Right ventricle myocardium inferior (tissue), 1 donor: ENCODE measurements at regions of chr3 and their contacts with region 1.

Region 1: GRCh38 chr3:23999012-23999641 is 54.0 kb downstream of the NR1D2 start:
- DNase-seq: peak; percentile 73
- ATAC-seq: no peak

Region 2: GRCh38 chr3:23600167-23600871 is 398.8 kb before region 1 on chr3:
- intact Hi-C with region 1: no loop called
- DNase-seq: no peak
- ATAC-seq: no peak

Region 3: DNA sequence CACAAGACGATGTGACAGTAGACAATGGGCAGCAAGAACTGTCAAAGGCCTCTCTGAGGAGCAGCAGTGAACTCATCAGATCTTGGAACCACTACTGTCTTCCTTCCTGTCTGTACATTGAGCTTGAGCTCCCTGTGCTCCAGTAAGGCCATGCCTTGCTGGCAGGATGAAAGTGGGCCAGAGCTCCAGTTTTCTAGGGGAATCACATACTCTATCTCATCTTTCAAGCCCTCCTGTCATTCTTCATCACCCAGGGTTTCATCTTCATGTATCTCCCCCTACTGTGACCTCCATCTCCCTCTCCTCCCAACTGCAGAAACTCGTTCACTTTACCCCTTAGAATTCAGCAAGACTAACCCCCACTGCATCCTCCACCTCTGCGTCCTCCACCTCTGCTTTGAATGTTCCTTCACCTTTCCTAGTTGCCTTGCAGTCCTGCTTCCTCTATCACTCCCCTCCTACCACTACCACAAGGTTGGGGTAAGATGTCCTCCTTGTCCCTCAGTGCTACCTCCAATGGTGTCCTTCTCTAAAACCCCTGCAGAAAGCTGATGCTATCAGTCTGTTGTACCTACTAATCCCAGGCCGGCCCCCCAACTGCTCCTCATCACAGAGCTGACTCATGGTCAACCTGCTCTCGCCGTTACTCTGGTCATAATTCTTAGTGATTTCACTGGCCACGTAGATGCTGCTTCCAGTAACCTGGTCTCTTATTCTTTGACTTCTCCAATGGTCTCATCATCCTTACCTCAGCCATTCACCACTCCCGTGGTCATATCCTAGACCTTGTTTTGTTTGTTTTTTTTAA is 104.7 kb before region 1 on chr3:
- intact Hi-C with region 1: loop called (anchors 10 kb)
- DNase-seq: no peak
- ATAC-seq: no peak

Region 4: GRCh38 chr3:24680214-24680967 is 681.3 kb after region 1 on chr3:
- intact Hi-C with region 1: loop called (anchors 2 kb)
- DNase-seq: peak; percentile 73
- ATAC-seq: peak; percentile 52